ENCODE measurements at regions of chr2 and their contacts with region 1.

Region 1: GRCh38 chr2:101818531-101819451 is 121.3 kb downstream of the MAP4K4 start:
- DNase-seq: no peak
- H3K4me3 ChIP-seq: no peak overlapping the region
- H3K27me3 ChIP-seq: no peaks in the 10 kb centered on the region
- CTCF ChIP-seq: no peak

Region 2: DNA sequence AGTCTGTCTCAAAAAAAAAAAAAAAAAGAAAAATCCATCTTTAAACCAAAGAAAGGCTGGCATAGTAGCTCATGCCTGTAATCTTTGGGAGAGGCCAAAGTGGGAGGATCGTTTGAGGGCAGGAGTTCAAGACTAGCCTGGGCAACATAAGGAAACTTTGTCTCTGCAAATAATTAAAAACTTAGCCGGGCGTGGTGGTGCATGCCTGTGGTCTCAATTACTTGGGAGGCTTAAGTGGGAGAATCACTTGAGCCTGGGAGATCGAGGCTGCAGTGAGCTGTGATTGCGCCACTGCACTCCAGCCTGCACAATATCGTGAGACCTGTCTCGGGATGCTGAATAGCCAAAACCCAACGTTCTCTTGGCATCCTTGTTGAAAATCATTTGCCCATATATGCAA is 560.0 kb before region 1 on chr2:
- CTCF ChIA-PET with region 1: no interaction called
- POLR2A ChIA-PET with region 1: interaction called, 18 read pairs
- DNase-seq: no peak
- H3K4me3 ChIP-seq: no peak overlapping the region
- H3K27me3 ChIP-seq: no peaks in the 10 kb centered on the region
- CTCF ChIP-seq: no peak

Region 3: GRCh38 chr2:101697124-101698013 is 121.4 kb before region 1 on chr2 and contains the start of gene MAP4K4:
- CTCF ChIA-PET with region 1: interaction called, 10 read pairs
- POLR2A ChIA-PET with region 1: no interaction called
- DNase-seq: no peak
- H3K4me3 ChIP-seq: peak within 1 kb of the TSS; percentile 68
- H3K27me3 ChIP-seq: no peaks in the 10 kb centered on the region
- CTCF ChIP-seq: peak; percentile 43
- polyA plus RNA-seq, gene MAP4K4: 53.5 and 73.4 TPM in 2 replicates

Region 4: DNA sequence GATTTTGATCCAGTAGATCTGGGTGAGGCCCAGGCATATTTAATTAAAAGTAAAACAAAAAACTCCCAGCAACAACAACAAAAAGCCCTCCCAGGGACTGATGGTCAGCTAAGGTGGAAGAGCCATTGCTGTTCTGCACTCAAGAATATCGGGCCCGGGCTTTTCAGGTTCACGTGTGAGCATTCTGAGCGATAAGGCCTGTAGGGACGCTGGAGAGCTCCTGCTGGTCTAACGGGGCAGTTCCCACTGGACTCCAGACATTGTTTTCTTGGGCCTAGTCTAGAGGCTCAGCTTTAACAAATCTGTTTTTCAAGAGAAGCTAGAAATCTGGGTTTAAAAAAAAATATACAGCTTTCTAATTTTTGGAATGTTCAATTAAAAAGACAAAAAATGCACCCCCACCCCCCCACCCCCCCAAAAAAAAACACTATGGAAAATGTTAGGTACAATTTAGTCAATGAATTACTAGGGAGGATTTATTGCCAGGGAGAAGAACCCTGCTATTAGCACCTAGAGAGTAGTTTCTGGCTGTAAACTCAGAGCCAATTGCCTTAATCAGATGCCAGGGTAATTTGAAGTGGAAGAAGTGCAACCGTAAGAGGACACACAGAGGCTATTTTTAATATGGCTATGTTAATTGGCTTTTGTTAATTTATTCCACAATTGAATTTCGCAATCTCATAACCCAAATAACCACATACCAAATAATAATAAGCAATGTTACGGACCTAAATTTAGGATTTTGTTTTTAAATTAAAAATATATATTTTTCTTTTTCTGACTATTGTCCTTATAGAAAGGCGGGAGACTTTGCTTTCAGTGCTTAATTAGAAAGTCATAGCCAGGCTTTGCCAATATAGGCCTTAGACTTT is 42.4 kb before region 1 on chr2:
- CTCF ChIA-PET with region 1: no interaction called
- POLR2A ChIA-PET with region 1: no interaction called
- DNase-seq: no peak
- H3K4me3 ChIP-seq: no peak overlapping the region
- H3K27me3 ChIP-seq: no peaks in the 10 kb centered on the region
- CTCF ChIP-seq: 0 out of 2 replicates have a peak, but pooled peaks have one; percentile 10

Region 5: GRCh38 chr2:101837354-101837753 is 18.6 kb after region 1 on chr2:
- CTCF ChIA-PET with region 1: interaction called, 8 read pairs
- POLR2A ChIA-PET with region 1: interaction called, 11 read pairs
- DNase-seq: no peak
- H3K4me3 ChIP-seq: no peak overlapping the region
- H3K27me3 ChIP-seq: no peaks in the 10 kb centered on the region
- CTCF ChIP-seq: no peak

Region 6: DNA sequence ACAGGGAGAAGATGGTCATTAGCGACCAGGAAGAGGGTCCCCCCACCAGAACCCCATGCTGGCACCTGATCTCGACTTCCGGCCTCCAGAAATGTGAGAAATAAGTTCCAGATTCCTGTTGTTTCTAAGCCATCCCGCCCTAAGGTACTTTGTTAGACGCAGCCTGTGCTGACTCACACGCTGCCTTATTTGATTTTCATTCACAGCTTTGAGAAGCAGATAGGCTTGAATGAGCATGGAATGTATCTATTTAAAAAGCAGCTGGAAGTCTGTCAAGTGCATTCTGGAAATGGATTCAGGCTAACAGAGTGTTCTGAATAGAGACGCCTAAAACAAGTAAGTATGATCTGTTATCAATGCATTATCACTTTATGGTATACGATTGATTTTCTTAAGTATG is 164.7 kb after region 1 on chr2:
- CTCF ChIA-PET with region 1: no interaction called
- POLR2A ChIA-PET with region 1: no interaction called
- DNase-seq: no peak
- H3K4me3 ChIP-seq: no peak overlapping the region
- H3K27me3 ChIP-seq: no peaks in the 10 kb centered on the region; the same call in 1 of the 2 replicates
- CTCF ChIP-seq: no peak